WTC11 (cell line): ENCODE measurements at regions of chr16 and their contacts with region 1.

Region 1: GRCh38 chr16:30417529-30418349 is 10.3 kb downstream of the ZNF771 start:
- DNase-seq: peak; percentile 88
- ATAC-seq: peak; percentile 88
- H3K4me3 Mint-ChIP-seq: peak overlapping the region; percentile 54
- H3K27ac Mint-ChIP-seq: no peak overlapping the region
- H3K4me1 Mint-ChIP-seq: peaks cover 9% of the 10 kb centered on the region
- H3K27me3 Mint-ChIP-seq: no peaks in the 10 kb centered on the region
- CTCF ChIP-seq: no peak

Region 2: GRCh38 chr16:30445408-30446202 is 27.9 kb after region 1 on chr16 and contains the start of gene SEPHS2:
- CTCF ChIA-PET with region 1: no interaction called
- POLR2A ChIA-PET with region 1: no interaction called
- DNase-seq: peak; percentile 96
- ATAC-seq: peak; percentile 91
- H3K4me3 Mint-ChIP-seq: peak within 1 kb of the TSS; percentile 77
- H3K27ac Mint-ChIP-seq: peak within 1 kb of the TSS; percentile 98
- H3K4me1 Mint-ChIP-seq: peaks cover 22% of the 10 kb centered on the region
- H3K27me3 Mint-ChIP-seq: peaks cover 28% of the 10 kb centered on the region
- CTCF ChIP-seq: no peak
- total RNA-seq, gene SEPHS2: 50.4 to 55.2 TPM (median 53.5 TPM) in 3 replicates

Region 3: DNA sequence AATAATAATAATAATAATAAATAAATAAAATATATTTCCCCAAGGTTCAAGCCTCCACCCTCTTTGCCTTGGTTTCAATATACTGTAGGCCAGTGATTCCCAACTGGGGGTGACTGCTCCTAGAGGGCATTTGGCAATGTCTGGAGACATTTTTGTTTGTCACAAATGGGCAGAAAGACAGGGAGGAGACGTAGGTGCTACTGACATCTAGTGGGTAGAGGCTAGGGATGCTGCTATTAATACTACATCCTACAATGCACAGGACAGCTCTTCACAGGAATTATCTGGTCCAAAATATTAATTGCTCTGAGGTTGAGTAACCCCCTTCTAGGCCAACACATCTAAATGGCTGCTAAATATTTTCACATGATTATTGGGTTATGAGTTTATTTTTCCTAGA is 220.2 kb after region 1 on chr16:
- CTCF ChIA-PET with region 1: interaction called, 11 read pairs
- POLR2A ChIA-PET with region 1: interaction called, 3 read pairs
- DNase-seq: no peak
- ATAC-seq: peak; percentile 16
- H3K4me3 Mint-ChIP-seq: no peak overlapping the region
- H3K27ac Mint-ChIP-seq: no peak overlapping the region
- H3K4me1 Mint-ChIP-seq: peaks cover 7% of the 10 kb centered on the region
- H3K27me3 Mint-ChIP-seq: peaks cover 3% of the 10 kb centered on the region
- CTCF ChIP-seq: no peak